Colonic mucosa (tissue), 4 donors: ENCODE measurements at regions of chr7 and their contacts with region 1.

Region 1: DNA sequence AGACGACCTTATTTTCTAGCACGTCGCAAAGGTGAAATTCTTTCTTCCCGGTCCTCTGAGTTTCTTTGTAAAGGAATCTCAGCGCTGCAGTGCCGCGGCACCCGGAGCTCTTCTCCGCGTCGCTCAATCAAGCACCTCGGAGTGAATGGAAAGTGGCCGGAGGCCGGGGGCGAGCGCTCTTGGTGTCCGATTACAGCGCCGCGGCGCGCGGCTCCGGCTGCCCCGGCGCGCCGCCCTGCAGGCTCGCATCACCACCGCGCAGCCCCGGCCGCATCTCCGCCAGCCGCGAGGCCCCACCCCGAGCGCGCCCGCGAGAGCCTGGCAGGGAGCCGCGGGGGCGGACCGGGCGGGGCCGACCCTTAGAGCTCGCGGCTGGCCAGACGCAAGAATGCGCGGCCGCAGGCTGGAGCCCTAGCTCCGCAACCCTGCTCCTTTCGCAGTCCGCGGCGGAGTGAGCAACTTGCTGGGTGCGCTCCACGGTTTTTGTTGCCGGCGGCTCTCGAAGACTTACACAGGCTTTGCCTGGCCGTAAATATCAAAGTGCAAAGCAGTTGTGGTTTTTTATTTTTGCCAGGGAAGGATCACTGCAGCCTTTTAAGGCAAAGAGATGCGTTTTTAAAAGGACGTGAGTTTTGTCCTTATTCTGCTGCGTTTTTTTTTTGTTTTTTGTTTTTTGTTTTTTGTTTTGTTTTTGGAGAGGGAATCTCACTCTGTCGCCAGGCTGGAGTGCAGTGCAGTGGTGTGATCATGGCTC is at the start of gene SEMA3C:
- DNase-seq: peak; percentile 90
- H3K4me3 ChIP-seq: peak within 1 kb of the TSS; percentile 41
- H3K27ac ChIP-seq: peak within 1 kb of the TSS; percentile 87
- H3K4me1 ChIP-seq: peaks cover 6% of the 10 kb centered on the region
- H3K27me3 ChIP-seq: no peaks in the 10 kb centered on the region
- CTCF ChIP-seq: no peak
- total RNA-seq, gene SEMA3C: 41.9 to 103 TPM

Region 2: DNA sequence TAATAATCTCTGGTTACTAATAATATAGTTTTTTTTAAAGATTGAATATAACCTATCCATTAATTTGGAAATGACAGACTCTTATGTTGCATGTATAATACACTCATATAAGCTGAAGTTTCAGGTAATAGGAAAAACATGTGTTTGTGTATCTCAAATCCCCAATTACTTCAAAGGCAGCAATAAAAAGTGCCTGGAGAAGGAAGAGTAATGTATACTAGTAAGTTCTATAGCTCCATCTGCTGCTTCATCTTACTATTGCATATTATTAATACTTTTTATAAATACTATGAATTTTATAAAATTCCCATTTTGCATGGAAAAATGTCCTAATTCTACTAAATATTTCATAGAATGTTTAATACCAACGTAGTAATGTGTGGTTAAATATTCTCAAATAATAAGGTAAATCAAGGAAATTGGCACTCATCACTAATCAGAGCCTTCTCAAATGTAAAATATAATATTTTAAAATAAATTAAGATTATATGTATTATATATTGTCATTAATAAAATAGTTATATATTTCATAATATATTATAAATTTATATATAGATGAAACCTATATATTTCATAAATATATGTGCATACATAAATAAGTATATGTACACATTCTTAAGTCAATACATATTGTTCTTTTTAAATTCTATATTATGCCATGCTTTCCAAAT is 538.9 kb after region 1 on chr7:
- intact Hi-C with region 1: loop called (anchors 5 kb)
- DNase-seq: no peak
- H3K4me3 ChIP-seq: no peak overlapping the region
- H3K27ac ChIP-seq: no peak overlapping the region
- H3K4me1 ChIP-seq: no peaks in the 10 kb centered on the region
- H3K27me3 ChIP-seq: no peaks in the 10 kb centered on the region
- CTCF ChIP-seq: peak; percentile 37